Tibial artery (tissue), 4 donors: ENCODE measurements at regions of chr2 and their contacts with region 1.

Region 1: DNA sequence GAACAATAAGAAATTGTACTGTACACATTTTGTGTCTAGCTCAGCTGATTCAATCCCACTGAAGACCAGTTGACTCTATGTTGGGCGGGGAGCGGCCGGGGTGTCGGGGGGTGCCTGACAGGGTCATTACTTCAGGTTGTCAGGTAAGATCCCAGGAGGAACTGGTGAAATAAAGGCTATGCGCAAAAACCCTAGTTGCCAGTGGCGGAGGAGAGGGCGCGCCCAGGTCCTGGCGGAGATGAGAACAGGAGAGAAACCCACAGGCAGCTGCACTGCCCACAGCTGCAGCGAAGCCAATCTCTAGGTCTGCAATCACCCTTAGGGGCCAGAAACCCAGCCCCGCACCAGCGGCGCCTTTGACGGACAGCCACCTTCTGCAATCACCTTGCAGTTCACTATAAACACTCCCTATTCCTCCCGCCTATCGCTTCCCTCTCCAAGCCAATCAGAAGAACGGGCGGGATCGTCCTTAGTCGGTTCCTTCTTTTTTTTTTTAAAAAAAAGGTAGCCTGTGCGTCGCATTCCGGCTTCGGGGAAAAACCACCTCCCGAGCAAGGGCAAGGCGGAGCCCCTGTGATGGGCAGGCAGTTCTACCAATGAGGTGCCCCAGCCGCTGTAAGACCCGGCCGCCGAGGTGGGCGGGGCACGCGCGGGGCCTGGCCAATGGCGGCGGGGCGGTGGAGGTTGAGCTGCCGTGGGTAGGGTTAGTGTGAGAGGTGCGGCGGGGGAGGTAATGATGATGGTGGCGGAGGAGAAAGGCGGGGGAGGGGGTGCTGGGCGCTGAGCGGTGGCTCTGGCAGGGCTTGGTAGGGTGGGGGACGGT is at the start of gene EHBP1:
- DNase-seq: peak; percentile 98 to 100
- H3K4me3 ChIP-seq: peak within 1 kb of the TSS; percentile 69 to 92
- H3K27ac ChIP-seq: peak within 1 kb of the TSS; percentile 89 to 96
- H3K4me1 ChIP-seq: peaks cover 0 to 39% (median 20%) of the 10 kb centered on the region in 4 donors
- H3K27me3 ChIP-seq: no peaks in the 10 kb centered on the region
- CTCF ChIP-seq: no peak

Region 2: DNA sequence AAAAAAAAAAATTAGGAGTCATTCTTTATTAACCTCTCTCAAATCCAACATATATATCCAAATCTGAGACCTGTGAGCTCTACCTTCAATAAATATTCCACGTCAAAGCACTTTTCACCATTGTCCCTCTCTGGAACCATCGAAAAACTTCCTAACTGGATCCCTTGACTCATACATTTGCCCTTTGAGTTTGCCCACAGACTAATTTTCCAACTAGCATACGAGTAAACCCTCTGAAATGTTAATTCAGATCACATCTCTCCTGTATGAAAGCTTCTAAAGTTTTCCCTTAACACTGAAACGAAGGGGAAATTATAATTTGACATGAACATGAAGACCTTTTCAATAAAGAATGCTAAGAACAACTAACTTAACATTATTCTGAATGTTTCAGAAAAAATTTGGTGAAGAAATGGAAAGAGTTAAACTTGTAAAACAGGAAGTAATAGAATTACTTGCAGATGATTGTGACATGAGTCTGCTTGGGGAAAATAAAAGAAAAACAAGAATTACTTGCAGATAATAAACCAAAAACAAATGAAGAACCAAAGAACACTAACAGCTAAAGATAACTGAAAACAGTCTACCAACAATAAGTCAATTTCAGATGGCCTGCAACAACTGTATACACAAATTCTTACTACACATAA is 1432.7 kb before region 1 on chr2:
- intact Hi-C with region 1: no loop called
- DNase-seq: no peak
- H3K4me3 ChIP-seq: no peak overlapping the region
- H3K27ac ChIP-seq: no peak overlapping the region
- H3K4me1 ChIP-seq: no peaks in the 10 kb centered on the region
- H3K27me3 ChIP-seq: no peaks in the 10 kb centered on the region
- CTCF ChIP-seq: no peak

Region 3: DNA sequence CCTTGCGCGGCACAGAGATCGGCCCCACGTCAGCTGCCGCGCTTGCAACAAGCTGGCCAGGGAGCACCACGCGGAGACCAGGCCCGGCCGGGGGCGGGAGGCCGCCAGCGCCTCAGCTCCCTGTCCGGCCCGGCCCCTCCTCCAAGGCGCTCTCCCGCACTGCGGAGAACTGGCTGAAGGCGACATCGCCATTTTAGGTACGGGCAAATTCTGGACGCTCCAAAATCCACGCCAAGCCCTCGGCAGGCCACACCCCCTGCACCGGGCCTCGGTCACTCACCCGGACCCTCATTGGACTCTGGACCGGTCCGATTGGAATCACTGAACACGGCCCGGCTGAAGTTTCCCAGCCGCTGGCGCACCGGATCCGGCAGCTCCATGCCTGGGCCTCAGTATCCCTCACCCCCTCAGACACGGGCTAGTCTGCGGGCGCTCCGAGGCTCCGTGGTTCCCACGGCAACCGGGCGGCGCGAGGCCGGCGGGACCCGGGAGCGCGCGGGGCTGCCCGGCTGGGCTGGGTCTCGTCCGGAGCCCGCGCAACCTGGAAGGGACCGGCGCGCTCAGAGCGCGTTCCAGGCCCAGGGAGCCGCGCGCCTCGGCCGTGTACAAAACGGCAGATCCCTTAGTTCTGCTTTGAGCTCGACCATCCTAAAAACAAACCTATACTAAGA is 199.3 kb before region 1 on chr2 and contains the start of gene TMEM17:
- intact Hi-C with region 1: loop called (anchors 5 kb)
- DNase-seq: peak; percentile 90 to 96
- H3K4me3 ChIP-seq: peak within 1 kb of the TSS; percentile 70 to 79
- H3K27ac ChIP-seq: peak within 1 kb of the TSS; percentile 92
- H3K4me1 ChIP-seq: peaks cover 0 to 10% (median 5%) of the 10 kb centered on the region in 4 donors
- H3K27me3 ChIP-seq: no peaks in the 10 kb centered on the region
- CTCF ChIP-seq: no peak

Region 4: GRCh38 chr2:62736899-62737559 is 31.8 kb after region 1 on chr2:
- intact Hi-C with region 1: no loop called
- DNase-seq: no peak
- H3K4me3 ChIP-seq: no peak overlapping the region
- H3K27ac ChIP-seq: no peak overlapping the region
- H3K4me1 ChIP-seq: peaks cover 0 to 28% (median 3%) of the 10 kb centered on the region in 4 donors
- H3K27me3 ChIP-seq: no peaks in the 10 kb centered on the region
- CTCF ChIP-seq: no peak

Region 5: DNA sequence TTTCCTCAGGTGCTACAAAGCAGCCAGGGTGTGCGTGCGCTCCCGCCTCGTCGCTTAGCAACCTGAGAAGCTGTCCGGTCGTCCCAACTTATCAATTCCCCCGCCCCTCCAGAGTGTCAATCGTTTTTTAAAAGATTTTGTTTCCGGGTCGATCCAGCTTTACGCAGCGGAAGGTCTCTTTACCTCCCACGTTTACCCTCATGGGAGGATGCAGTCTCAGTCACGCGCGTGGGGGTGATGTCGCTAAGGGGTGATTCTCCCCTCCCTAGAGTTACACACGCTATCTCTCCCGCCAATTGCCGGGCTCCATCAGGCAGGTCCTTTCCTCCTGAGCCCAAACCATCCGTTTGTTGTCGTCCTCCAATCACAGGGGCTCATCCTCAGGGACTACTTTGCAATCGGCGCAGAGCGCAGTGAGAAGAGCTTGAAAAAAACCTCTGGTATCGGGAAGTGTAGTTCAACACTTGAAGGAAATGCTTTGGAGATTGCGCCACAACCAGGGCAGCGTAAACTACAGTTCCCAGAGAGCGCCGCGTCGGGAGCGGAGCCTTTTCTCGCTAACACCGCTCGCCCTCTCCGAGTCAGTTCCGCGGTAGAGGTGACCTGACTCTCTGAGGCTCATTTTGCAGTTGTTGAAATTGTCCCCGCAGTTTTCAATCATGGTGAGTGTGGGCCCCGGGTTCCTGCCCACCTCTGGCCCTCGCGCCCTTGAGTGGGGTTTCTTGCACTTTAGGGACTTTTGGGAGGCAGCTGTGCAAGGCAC is 883.3 kb after region 1 on chr2 and contains the starts of genes MDH1 and WDPCP:
- intact Hi-C with region 1: loop called (anchors 10 kb)
- DNase-seq: peak; percentile 95 to 98
- H3K4me3 ChIP-seq: peak within 1 kb of the TSS; percentile 71 to 94
- H3K27ac ChIP-seq: peak within 1 kb of the TSS; percentile 91
- H3K4me1 ChIP-seq: peaks cover 0 to 39% (median 27%) of the 10 kb centered on the region in 4 donors
- H3K27me3 ChIP-seq: no peaks in the 10 kb centered on the region
- CTCF ChIP-seq: no peak